ENCODE measurements at regions of chr15 and their contacts with region 1.

Region 1: DNA sequence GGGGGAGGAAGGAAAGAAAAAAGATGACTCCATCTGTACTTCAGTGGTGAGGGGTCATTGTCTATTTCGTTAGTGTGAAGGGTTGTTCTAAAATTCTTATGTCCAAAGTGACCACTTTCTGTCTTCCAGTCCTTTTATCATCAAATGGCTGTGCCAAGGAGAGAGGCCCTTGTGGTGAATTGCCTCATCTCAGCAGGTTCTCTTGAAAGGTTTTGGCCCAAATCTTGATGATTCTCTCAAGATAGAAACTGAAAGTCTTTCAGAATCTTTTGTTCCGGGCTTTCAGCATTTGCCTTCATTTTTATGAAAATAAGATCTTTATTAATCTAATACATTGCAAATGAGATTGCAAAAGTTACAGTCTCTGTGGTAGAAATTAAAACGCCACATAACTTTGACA is 575.8 kb downstream of the RSL24D1 start:
- DNase-seq: no peak
- H3K4me3 ChIP-seq: no peak overlapping the region
- H3K27ac ChIP-seq: no peak overlapping the region
- H3K4me1 ChIP-seq: no peaks in the 10 kb centered on the region
- H3K27me3 ChIP-seq: no peaks in the 10 kb centered on the region
- CTCF ChIP-seq: no peak
- EP300 ChIP-seq: no peak
- POLR2A ChIP-seq: no peak

Region 2: GRCh38 chr15:54571576-54571975 is 49.3 kb before region 1 on chr15:
- intact Hi-C with region 1: loop called (anchors 5 kb)
- DNase-seq: no peak
- H3K4me3 ChIP-seq: no peak overlapping the region
- H3K27ac ChIP-seq: no peak overlapping the region
- H3K4me1 ChIP-seq: no peaks in the 10 kb centered on the region
- H3K27me3 ChIP-seq: no peaks in the 10 kb centered on the region
- CTCF ChIP-seq: no peak
- EP300 ChIP-seq: no peak
- POLR2A ChIP-seq: no peak

Region 3: GRCh38 chr15:54836052-54836795 is 215.3 kb after region 1 on chr15:
- intact Hi-C with region 1: no loop called
- DNase-seq: no peak
- H3K4me3 ChIP-seq: no peak overlapping the region
- H3K27ac ChIP-seq: no peak overlapping the region
- H3K4me1 ChIP-seq: no peaks in the 10 kb centered on the region
- H3K27me3 ChIP-seq: no peaks in the 10 kb centered on the region
- CTCF ChIP-seq: no peak
- EP300 ChIP-seq: no peak
- POLR2A ChIP-seq: no peak